ENCODE measurements at regions of chr2 and their contacts with region 1.

Region 1: GRCh38 chr2:96960153-96960961 is 26.0 kb downstream of the FAM178B start:
- DNase-seq: peak; percentile 72 to 96
- H3K4me3 ChIP-seq: no peak overlapping the region
- CTCF ChIP-seq: peak in 1 of 3 donors; percentile 65
- POLR2A ChIP-seq: no peak

Region 2: DNA sequence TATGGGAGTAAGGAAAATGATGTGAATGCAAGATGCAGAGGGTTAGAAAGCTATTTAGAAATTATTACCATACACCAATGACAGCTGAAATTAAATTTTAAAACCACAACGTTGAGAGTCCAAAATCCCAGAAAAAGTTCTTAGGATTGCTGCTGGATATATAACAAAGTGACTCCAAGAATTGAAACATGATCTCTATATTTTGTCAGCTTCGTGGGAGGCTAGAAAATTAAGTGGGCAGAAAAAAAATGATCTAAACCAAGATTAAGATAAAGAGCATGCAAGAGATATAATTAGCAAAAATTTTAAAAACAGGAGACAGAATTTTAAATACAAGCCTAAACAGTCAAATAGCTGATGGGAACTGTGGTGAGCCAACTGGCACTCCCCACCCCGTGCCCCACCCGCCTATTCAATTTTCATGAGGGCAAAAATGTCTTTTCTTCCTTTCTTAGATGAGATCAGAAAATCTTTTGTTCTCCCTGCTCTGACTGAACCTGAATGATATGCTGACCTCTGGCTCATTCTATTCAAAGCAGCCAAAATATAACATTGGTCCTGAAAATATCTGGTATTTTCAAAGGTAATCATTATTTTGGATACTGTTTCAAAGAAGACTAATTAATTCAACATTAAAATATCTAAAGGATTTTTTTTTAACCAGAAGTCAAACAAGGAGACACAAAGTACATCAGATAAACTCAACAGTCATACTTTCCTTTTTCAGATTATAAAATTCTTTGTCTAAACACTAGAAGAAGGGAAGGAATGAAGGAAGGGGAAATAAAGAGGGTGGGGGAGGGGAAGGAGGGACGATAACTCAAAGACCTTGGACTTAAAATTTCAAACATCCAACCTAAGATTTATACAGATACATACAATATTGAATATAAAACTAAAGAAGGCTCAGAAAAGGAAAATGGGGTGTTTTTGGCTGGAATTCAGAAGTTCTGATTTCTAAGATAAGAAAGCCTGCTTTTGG is 334.5 kb before region 1 on chr2:
- intact Hi-C with region 1: loop called (anchors 10 kb)
- DNase-seq: no peak
- H3K4me3 ChIP-seq: no peak overlapping the region
- CTCF ChIP-seq: no peak
- POLR2A ChIP-seq: no peak

Region 3: DNA sequence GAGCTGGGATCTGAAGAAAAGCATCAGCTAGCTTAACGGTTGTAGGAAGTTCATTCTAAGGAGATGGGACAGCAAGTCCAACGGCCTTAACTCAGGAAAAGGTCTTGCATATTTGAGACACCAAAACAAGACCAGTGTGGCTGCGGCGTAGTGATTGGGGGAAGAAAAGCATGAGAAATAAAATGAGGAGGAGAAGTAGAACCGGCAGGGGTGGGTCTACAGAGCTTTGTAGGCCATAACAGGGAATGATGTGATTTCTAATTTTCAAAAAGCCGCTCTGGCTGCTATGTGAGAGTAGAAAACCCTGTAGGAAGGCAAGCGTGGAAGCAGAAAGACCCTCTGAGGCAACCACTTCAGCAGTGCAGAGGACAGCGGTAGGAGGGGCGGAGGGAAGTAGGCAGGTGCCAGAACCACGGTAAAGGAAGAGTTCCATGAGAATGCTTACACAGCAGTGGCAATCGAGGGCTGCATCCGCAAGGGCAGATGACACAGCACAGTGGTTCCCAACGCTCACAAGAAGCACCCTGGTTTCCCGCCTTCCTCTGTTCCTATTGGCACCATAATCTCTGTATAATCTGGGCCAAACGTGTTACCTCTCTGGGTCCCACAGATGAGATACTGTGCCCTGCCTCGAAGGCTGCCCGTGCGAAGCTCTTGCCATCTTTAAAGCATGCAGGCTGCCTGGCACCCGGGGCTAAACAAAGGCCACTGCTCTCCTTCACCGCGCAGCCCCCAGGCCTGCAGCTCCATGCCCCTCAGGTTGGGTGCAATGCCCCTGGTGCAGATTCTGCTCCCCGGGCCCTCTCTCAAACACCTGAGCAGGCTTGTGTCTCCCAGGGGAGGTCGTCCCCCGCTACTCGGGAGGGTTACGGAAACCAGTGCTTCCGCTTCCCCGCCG is 103.3 kb before region 1 on chr2:
- intact Hi-C with region 1: loop called (anchors 2 kb)
- DNase-seq: no peak
- H3K4me3 ChIP-seq: peak overlapping the region; percentile 56
- CTCF ChIP-seq: no peak
- POLR2A ChIP-seq: no peak

Measured in lower leg skin (tissue), 4 donors.